ENCODE measurements at regions of chr15 and their contacts with region 1.

Region 1: GRCh38 chr15:49135893-49136292 is 19.5 kb downstream of the COPS2 start:
- H3K4me3 Mint-ChIP-seq: no peak overlapping the region
- H3K27ac Mint-ChIP-seq: no peak overlapping the region
- H3K4me1 Mint-ChIP-seq: no peaks in the 10 kb centered on the region
- H3K27me3 Mint-ChIP-seq: no peaks in the 10 kb centered on the region

Region 2: DNA sequence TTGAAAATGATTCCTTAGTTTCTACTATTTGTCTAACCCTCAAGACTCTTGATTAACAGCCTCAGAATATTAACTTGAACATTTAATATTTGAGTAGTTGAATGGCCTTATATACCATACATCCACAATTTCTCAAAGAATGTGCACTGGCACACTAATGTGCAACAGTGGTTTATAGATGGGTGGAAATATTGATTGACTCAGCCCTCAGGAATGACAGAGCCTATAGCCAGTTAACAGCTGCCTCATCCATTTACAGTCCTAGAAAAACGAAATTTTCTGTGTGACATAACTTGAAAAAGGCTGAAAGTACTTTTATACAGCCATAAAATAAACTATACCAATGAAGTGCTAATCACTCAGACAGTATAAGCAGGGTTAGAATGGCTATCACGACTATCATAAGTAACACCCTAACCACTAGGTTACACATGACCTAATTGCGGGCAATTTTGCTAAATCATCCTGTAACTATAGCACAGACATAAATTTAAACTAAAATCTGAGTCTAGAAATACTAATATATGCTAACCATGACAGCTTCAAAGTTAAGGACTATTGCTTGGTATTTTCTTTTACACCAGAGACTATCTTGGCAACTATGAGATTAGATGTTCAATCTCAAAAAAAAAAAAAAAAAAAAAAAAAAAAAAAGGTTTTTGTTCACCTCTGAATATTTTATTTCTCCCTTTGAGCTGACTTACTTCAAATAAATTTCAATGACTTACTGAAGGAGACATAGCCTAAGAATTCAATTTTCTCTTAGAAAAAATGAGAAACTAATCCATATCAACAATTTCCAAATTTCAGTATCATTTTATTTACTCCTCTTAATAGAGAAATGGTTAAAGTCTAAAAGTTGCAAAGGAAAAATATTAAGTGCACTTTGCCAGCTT is 99.0 kb before region 1 on chr15:
- intact Hi-C with region 1: loop called (anchors 10 kb)
- H3K4me3 Mint-ChIP-seq: no peak overlapping the region
- H3K27ac Mint-ChIP-seq: no peak overlapping the region
- H3K4me1 Mint-ChIP-seq: peaks cover 11% of the 10 kb centered on the region
- H3K27me3 Mint-ChIP-seq: no peaks in the 10 kb centered on the region

Region 3: DNA sequence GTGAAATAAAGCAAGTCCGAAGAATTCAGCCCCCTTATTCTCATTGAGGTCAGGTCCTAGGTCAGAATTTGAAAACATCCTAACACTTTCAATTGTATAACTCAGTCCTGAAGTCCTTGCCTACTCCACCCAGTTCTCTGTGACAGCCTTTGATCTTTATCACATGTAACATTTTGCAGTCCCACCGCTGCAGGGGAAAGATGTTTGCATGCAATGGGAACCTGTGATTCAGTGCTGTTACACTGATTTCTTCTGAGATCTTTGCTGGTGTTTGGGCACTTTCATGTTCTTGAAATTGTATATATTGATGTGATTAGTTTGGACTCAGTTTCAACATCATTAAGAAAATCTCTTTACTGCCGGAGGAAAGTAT is 71.6 kb before region 1 on chr15:
- intact Hi-C with region 1: no loop called
- H3K4me3 Mint-ChIP-seq: no peak overlapping the region
- H3K27ac Mint-ChIP-seq: no peak overlapping the region
- H3K4me1 Mint-ChIP-seq: peaks cover 8% of the 10 kb centered on the region
- H3K27me3 Mint-ChIP-seq: no peaks in the 10 kb centered on the region

Region 4: DNA sequence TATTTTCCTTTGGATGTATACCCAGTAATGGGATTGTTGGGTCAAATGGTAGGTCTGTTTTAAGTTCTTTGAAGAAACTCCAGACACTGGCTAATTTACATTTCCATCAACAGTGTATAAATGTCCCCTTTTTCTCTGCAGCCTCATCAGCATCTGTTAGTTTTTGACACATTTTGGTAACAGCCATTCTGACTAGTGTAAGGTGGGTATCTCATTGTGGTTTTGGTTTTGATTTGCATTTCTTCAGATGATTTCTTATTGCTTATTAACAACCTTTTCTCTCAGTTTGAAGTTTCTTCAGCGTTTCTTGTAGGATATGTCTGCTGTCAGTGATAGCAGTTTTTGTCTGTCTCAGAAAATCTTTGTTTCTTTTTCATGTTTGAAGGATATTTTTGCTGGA is 49.6 kb after region 1 on chr15:
- intact Hi-C with region 1: no loop called
- H3K4me3 Mint-ChIP-seq: no peak overlapping the region
- H3K27ac Mint-ChIP-seq: no peak overlapping the region
- H3K4me1 Mint-ChIP-seq: peaks cover 25% of the 10 kb centered on the region
- H3K27me3 Mint-ChIP-seq: no peaks in the 10 kb centered on the region

Region 5: GRCh38 chr15:49406352-49407118 is 270.6 kb after region 1 on chr15:
- intact Hi-C with region 1: no loop called
- H3K4me3 Mint-ChIP-seq: no peak overlapping the region
- H3K27ac Mint-ChIP-seq: no peak overlapping the region
- H3K4me1 Mint-ChIP-seq: no peaks in the 10 kb centered on the region
- H3K27me3 Mint-ChIP-seq: no peaks in the 10 kb centered on the region